Tibial artery (tissue), 4 donors: ENCODE measurements at regions of chr10 and their contacts with region 1.

Region 1: GRCh38 chr10:75099952-75100763 is 11.3 kb upstream of the SAMD8 start:
- DNase-seq: peak; percentile 66 to 82
- H3K4me3 ChIP-seq: no peak overlapping the region
- H3K27ac ChIP-seq: no peak overlapping the region
- H3K4me1 ChIP-seq: peaks cover 0 to 7% (median 2%) of the 10 kb centered on the region in 4 donors
- H3K27me3 ChIP-seq: peaks cover 0 to 4% of the 10 kb centered on the region in 2 donors
- CTCF ChIP-seq: peak; percentile 96 to 98

Region 2: DNA sequence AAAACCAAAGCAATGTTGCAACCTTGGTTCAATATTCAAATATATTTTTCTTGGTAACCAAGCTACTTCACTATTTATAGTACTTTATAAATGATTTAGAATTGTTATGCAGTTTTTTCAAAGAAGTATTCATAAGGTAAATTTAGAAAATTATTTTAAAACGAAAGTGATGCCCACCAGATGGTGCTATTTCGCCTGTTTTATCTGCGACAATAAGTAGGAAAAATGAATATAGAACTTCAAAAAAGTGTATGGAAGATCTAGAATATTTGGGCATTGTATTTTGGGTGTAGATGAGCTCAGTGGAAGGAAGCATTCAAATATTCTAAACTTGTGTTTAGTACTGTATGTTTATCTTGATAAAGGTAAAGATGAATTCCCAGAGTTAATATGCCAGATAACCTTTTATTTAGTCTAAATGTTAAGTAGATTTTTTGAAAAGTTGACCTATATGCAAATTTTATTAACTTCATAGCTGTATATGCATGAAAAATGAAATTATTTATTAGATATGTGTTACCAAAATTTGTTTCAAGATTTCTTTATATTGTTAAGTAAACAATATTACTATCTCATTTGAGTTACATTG is 856.0 kb before region 1 on chr10:
- intact Hi-C with region 1: loop called (anchors 5 kb)
- DNase-seq: no peak
- H3K4me3 ChIP-seq: no peak overlapping the region
- H3K27ac ChIP-seq: no peak overlapping the region
- H3K4me1 ChIP-seq: no peaks in the 10 kb centered on the region
- H3K27me3 ChIP-seq: no peaks in the 10 kb centered on the region
- CTCF ChIP-seq: peak; percentile 48 to 69

Region 3: DNA sequence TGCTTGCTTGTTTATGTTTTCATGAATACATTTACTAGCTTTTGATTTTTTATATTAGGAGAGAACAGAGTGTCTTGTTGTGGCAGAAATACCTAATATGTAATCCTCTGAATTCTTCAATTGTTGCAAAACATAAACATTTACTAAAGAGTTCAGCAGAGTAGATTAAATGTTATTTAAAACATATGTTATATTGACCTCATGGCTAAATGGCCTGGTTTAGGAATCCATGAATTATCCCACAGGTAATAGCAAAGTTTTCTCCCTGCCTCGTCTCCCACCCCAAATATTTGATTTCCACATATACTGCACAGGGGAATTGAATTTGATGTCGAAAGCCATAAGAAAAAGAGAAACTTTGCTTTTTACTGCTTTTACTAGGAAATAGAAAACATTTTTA is 837.3 kb before region 1 on chr10:
- intact Hi-C with region 1: loop called (anchors 5 kb)
- DNase-seq: no peak
- H3K4me3 ChIP-seq: no peak overlapping the region
- H3K27ac ChIP-seq: no peak overlapping the region
- H3K4me1 ChIP-seq: no peaks in the 10 kb centered on the region
- H3K27me3 ChIP-seq: no peaks in the 10 kb centered on the region
- CTCF ChIP-seq: no peak

Region 4: DNA sequence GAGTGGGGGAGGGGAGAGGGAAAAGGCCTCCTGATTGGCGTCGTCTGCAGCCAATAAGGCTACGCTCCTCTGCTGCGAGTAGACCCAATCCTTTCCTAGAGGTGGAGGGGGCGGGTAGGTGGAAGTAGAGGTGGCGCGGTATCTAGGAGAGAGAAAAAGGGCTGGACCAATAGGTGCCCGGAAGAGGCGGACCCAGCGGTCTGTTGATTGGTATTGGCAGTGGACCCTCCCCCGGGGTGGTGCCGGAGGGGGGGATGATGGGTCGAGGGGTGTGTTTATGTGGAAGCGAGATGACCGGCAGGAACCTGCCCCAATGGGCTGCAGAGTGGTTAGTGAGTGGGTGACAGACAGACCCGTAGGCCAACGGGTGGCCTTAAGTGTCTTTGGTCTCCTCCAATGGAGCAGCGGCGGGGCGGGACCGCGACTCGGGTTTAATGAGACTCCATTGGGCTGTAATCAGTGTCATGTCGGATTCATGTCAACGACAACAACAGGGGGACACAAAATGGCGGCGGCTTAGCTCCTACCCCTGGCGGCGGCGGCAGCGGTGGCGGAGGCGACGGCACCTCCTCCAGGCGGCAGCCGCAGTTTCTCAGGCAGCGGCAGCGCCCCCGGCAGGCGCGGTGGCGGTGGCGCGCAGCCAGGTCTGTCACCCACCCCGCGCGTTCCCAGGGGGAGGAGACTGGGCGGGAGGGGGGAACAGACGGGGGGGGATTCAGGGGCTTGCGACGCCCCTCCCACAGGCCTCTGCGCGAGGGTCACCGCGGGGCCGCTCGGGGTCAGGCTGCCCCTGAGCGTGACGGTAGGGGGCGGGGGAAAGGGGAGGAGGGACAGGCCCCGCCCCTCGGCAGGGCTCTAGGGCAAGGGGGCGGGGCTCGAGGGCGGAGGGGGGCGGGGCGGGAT is 273.8 kb before region 1 on chr10 and contains the start of gene KAT6B:
- intact Hi-C with region 1: loop called (anchors 10 kb)
- DNase-seq: peak; percentile 100
- H3K4me3 ChIP-seq: peak within 1 kb of the TSS; percentile 65 to 99
- H3K27ac ChIP-seq: peak within 1 kb of the TSS; percentile 95 to 100
- H3K4me1 ChIP-seq: peaks cover 0 to 55% (median 42%) of the 10 kb centered on the region in 4 donors
- H3K27me3 ChIP-seq: no peaks in the 10 kb centered on the region
- CTCF ChIP-seq: peak; percentile 6 to 32

Region 5: DNA sequence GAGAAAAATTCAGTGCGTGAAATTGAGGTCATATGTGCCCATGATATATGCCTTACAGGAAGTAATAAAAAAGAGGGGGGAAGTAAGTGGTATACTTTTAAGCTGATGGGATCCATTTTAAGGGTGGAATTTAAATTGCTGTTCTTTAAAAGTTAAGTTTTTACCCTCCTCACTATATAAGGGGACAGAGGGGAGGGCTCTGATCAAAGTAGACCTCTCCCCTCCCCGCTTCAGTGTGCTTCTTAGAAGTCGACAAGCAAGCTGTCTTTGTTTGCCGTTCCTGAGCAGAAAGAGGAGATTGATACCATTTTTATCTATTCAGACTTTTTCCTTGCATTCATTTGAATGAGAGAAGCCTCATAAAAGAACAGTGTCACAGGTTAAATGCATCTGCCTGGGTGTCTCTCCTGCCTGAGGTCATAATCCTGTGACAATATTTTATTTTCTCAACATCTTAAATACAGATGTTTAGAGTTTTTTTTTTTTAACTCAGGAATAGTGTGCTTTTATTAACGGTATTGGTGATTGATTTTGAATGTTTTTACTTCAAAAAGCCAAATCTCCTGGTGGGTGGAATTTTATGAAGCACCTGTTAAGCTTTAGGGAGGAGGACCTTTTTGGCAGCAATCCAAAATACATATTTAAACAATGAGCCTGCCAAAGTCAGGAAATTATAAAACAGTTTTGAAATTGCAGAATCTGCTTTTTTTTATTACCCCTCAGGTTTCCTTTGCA is 132.1 kb before region 1 on chr10:
- intact Hi-C with region 1: no loop called
- DNase-seq: no peak
- H3K4me3 ChIP-seq: no peak overlapping the region
- H3K27ac ChIP-seq: no peak overlapping the region
- H3K4me1 ChIP-seq: peaks cover 0 to 14% (median 5%) of the 10 kb centered on the region in 4 donors
- H3K27me3 ChIP-seq: no peaks in the 10 kb centered on the region
- CTCF ChIP-seq: no peak

Region 6: DNA sequence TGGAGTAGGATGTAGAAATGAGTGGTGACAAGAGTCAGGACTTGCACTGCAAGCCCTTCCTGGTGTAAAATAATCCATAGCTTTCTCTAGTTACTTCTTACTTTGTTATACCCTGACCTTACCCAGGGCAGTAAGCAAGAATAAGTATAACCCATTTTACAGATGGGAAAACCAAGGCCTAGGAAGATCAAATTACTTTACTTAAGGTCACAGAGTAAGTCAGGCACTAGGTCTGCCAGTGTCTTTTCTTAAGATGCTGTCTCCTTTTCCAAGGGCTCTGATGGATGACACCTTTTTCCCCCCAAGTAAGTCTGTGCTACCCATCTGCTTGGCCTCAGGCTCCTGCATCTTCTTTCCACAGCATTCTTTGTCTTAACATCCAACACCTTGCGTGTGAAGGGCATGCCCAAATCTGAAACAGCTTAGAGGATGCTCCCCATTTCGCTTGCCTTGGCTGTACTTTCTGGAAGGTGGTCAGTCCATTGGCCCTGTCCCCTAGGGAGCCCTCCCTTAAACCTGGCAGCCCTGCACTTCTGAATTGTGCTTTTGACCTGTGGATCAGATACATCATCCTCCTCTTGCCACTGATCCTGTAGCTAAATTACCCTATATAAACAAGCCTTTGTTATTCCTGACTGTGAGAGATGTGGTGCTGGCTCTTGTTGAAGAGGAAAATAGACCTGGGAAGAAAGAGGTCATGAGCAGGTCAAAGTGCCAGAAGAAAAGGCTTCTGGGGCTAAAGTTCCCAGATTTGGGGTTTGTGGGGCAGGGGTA is 499.9 kb after region 1 on chr10:
- intact Hi-C with region 1: no loop called
- DNase-seq: no peak
- H3K4me3 ChIP-seq: no peak overlapping the region
- H3K27ac ChIP-seq: no peak overlapping the region
- H3K4me1 ChIP-seq: no peaks in the 10 kb centered on the region
- H3K27me3 ChIP-seq: no peaks in the 10 kb centered on the region
- CTCF ChIP-seq: no peak